MCF 10A (cell line): ENCODE measurements at regions of chr1 and their contacts with region 1.

Region 1: GRCh38 chr1:109548321-109549267 is at the start of gene GNAI3:
- DNase-seq: peak; percentile 96
- H3K4me3 Mint-ChIP-seq: peak within 1 kb of the TSS; percentile 83
- H3K27ac Mint-ChIP-seq: peak within 1 kb of the TSS; percentile 98
- H3K4me1 Mint-ChIP-seq: peaks cover 13% of the 10 kb centered on the region
- H3K27me3 Mint-ChIP-seq: no peaks in the 10 kb centered on the region
- CTCF ChIP-seq: no peak
- total RNA-seq, gene GNAI3: 8.0 and 8.6 TPM in 2 replicates

Region 2: GRCh38 chr1:109564194-109564878 is 15.7 kb after region 1 on chr1:
- CTCF ChIA-PET with region 1: interaction called, 6 read pairs
- POLR2A ChIA-PET with region 1: interaction called, 52 read pairs
- intact Hi-C with region 1: no loop called
- DNase-seq: no peak
- H3K4me3 Mint-ChIP-seq: no peak overlapping the region
- H3K27ac Mint-ChIP-seq: peak overlapping the region; percentile 74
- H3K4me1 Mint-ChIP-seq: peaks cover 27% of the 10 kb centered on the region
- H3K27me3 Mint-ChIP-seq: no peaks in the 10 kb centered on the region
- CTCF ChIP-seq: no peak

Region 3: GRCh38 chr1:109592916-109593315 is 44.3 kb after region 1 on chr1:
- CTCF ChIA-PET with region 1: no interaction called
- POLR2A ChIA-PET with region 1: interaction called, 10 read pairs
- intact Hi-C with region 1: no loop called
- DNase-seq: no peak
- H3K4me3 Mint-ChIP-seq: no peak overlapping the region
- H3K27ac Mint-ChIP-seq: no peak overlapping the region
- H3K4me1 Mint-ChIP-seq: no peaks in the 10 kb centered on the region
- H3K27me3 Mint-ChIP-seq: no peaks in the 10 kb centered on the region
- CTCF ChIP-seq: no peak

Region 4: GRCh38 chr1:109620841-109621286 is 72.3 kb after region 1 on chr1:
- CTCF ChIA-PET with region 1: interaction called, 15 read pairs
- POLR2A ChIA-PET with region 1: interaction called, 99 read pairs
- intact Hi-C with region 1: loop called (anchors 2 kb)
- DNase-seq: peak; percentile 85
- H3K4me3 Mint-ChIP-seq: peak overlapping the region; percentile 97
- H3K27ac Mint-ChIP-seq: peak overlapping the region; percentile 92
- H3K4me1 Mint-ChIP-seq: peaks cover 40% of the 10 kb centered on the region
- H3K27me3 Mint-ChIP-seq: no peaks in the 10 kb centered on the region
- CTCF ChIP-seq: no peak

Region 5: GRCh38 chr1:109636201-109636952 is 87.8 kb after region 1 on chr1:
- CTCF ChIA-PET with region 1: interaction called, 32 read pairs
- POLR2A ChIA-PET with region 1: interaction called, 31 read pairs
- intact Hi-C with region 1: loop called (anchors 1 kb)
- DNase-seq: peak; percentile 64
- H3K4me3 Mint-ChIP-seq: no peak overlapping the region
- H3K27ac Mint-ChIP-seq: no peak overlapping the region
- H3K4me1 Mint-ChIP-seq: peaks cover 8% of the 10 kb centered on the region
- H3K27me3 Mint-ChIP-seq: no peaks in the 10 kb centered on the region
- CTCF ChIP-seq: no peak

Region 6: DNA sequence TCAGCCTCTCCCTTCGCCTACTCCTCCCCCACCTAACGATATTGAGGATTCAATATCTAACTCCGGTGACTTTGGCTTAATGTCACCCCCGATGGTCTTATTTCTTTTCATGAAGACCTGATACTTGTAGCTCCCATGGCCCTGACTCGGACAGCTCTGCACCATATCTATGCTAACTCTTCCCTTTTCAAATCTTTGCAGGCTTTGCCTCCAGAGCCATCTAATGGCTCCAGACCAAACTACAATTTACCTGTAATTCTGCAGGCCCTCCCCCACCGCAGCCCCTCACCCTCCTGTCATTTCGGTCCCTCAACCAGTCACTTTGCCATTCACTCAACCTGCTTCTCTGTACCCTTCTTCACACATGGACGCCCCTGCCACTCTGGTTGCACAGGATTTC is 155.6 kb after region 1 on chr1:
- CTCF ChIA-PET with region 1: no interaction called
- POLR2A ChIA-PET with region 1: no interaction called
- intact Hi-C with region 1: no loop called
- DNase-seq: no peak
- H3K4me3 Mint-ChIP-seq: no peak overlapping the region
- H3K27ac Mint-ChIP-seq: no peak overlapping the region
- H3K4me1 Mint-ChIP-seq: no peaks in the 10 kb centered on the region
- H3K27me3 Mint-ChIP-seq: no peaks in the 10 kb centered on the region
- CTCF ChIP-seq: no peak

Region 7: GRCh38 chr1:109773146-109773899 is 224.7 kb after region 1 on chr1:
- CTCF ChIA-PET with region 1: interaction called, 123 read pairs
- POLR2A ChIA-PET with region 1: interaction called, 29 read pairs
- intact Hi-C with region 1: loop called (anchors 1 kb)
- DNase-seq: peak; percentile 90
- H3K4me3 Mint-ChIP-seq: no peak overlapping the region
- H3K27ac Mint-ChIP-seq: no peak overlapping the region
- H3K4me1 Mint-ChIP-seq: peaks cover 9% of the 10 kb centered on the region
- H3K27me3 Mint-ChIP-seq: no peaks in the 10 kb centered on the region
- CTCF ChIP-seq: peak; percentile 85